Activated CD8-positive, alpha-beta T cell treated with anti-CD3 and anti-CD28 coated beads for 36 hours (primary cell): ENCODE measurements at regions of chr17 and their contacts with region 1.

Region 1: DNA sequence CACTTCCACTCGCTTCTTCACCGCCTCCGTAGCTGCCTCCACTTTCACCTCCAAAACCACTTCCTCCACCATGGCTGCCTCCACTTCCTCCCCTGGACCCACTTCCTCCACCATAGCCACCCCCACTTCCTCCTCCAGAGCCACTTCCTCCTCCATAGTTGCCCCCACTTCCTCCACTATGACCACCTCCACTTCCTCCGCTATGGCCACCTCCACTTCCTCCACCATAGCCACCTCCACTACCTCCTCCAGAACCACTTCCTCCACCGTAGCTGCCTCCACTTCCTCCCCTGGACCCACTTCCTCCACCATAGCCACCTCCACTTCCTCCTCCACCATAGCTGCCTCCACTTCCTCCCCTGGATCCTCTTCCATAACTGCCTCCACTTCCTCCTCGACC is 4.5 kb downstream of the KRT9 start:
- DNase-seq: peak; percentile 9
- ATAC-seq: peak; percentile 20
- H3K4me3 Mint-ChIP-seq: no peak overlapping the region
- H3K27ac Mint-ChIP-seq: peak overlapping the region; percentile 65
- H3K4me1 Mint-ChIP-seq: peaks cover 10% of the 10 kb centered on the region
- H3K27me3 Mint-ChIP-seq: peaks cover 21% of the 10 kb centered on the region
- CTCF ChIP-seq: no peak

Region 2: GRCh38 chr17:41540921-41541625 is 26.2 kb before region 1 on chr17:
- CTCF ChIA-PET with region 1: no interaction called
- POLR2A ChIA-PET with region 1: no interaction called
- intact Hi-C with region 1: no loop called
- DNase-seq: no peak
- ATAC-seq: no peak
- H3K4me3 Mint-ChIP-seq: no peak overlapping the region
- H3K27ac Mint-ChIP-seq: no peak overlapping the region
- H3K4me1 Mint-ChIP-seq: no peaks in the 10 kb centered on the region
- H3K27me3 Mint-ChIP-seq: peaks cover 7% of the 10 kb centered on the region
- CTCF ChIP-seq: no peak

Region 3: GRCh38 chr17:41579484-41580243 is 12.3 kb after region 1 on chr17:
- CTCF ChIA-PET with region 1: interaction called, 10 read pairs
- POLR2A ChIA-PET with region 1: no interaction called
- intact Hi-C with region 1: no loop called
- DNase-seq: peak; percentile 90
- ATAC-seq: peak; percentile 100
- H3K4me3 Mint-ChIP-seq: no peak overlapping the region
- H3K27ac Mint-ChIP-seq: no peak overlapping the region
- H3K4me1 Mint-ChIP-seq: no peaks in the 10 kb centered on the region
- H3K27me3 Mint-ChIP-seq: peaks cover 38% of the 10 kb centered on the region
- CTCF ChIP-seq: peak; percentile 71

Region 4: DNA sequence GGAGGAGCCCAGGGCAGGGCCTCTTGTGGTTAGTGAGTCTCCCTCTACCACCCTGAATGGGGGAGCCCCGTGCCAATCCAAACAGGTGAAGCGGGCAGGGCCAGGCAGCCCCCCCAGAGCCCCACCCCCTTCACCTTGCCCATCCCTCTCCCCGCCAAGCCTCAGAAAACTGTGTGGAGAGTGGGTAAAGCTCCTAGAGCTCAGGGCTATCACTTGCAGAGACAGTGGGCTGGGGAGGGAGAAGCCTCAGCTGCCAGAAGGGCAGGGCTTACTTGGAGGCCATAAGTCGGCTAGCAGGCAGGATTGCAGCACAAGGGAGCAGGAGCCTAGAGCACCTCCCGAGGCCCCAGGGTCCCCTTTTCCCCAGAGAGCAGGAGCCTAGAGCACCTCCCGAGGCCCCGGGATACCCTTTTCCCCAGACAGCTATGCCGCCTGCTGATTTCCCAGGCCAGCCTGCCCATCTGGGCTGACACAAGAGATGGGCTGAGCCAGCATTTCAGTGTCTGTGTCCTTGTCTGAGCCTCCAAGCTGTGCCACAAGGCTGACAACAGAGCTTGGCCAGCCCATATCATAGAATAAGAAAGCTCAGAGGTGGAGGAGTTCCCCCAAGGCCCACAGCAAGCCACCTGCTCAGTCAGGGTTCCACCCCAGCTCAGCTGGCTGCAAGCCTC is 26.1 kb after region 1 on chr17:
- CTCF ChIA-PET with region 1: no interaction called
- POLR2A ChIA-PET with region 1: no interaction called
- intact Hi-C with region 1: no loop called
- DNase-seq: no peak
- ATAC-seq: no peak
- H3K4me3 Mint-ChIP-seq: no peak overlapping the region
- H3K27ac Mint-ChIP-seq: no peak overlapping the region
- H3K4me1 Mint-ChIP-seq: no peaks in the 10 kb centered on the region
- H3K27me3 Mint-ChIP-seq: peaks cover 11% of the 10 kb centered on the region
- CTCF ChIP-seq: no peak